Left colon (tissue), 2 donors: ENCODE measurements at regions of chr14 and their contacts with region 1.

Region 1: GRCh38 chr14:89430391-89431236 is 13.6 kb upstream of the FOXN3 start:
- DNase-seq: no peak
- ATAC-seq: peak; percentile 20

Region 2: GRCh38 chr14:89033756-89034155 is 396.9 kb before region 1 on chr14:
- intact Hi-C with region 1: loop called in 1 of 2 experiments (anchors 10 kb)
- DNase-seq: no peak
- ATAC-seq: no peak

Region 3: DNA sequence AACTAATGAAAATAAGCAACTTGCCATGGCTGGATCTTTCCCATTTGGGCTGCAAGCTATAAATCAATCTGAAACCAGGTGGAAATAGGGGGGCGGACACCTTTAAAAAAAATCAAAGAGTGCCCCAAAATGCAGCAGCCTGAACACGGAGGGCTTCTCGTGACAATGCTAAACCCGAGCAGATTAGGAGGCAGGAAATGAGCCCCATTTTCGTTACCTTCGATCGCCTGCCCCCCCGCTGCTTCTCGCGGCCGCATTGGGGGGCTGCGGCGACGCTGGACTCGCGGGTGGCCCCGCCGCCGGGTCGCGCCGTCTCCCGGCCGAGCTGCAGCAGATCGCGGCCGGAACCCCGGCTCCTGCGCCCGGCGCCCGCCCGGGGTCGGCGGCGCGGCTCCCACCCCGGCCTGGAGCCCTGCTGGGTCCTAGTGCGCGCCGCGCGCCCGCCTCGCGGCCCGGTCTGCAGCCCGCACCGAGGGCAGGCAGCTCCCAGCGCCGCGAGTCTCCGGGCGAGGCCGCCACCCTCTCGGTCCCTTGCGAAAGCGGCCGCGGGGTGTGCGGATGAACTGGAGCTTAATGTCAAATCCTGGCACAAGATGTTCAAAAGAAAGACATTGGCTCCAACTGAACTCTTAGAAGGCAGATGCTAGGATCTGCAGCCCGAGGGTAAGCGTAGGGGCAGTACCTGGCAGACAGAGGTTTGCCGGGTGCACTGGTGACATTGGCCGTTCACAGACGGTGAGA is 188.4 kb after region 1 on chr14:
- intact Hi-C with region 1: loop called in 1 of 2 experiments (anchors 10 kb)
- DNase-seq: peak; percentile 56 to 78
- ATAC-seq: peak; percentile 90